ENCODE measurements at regions of chr7 and their contacts with region 1.

Region 1: DNA sequence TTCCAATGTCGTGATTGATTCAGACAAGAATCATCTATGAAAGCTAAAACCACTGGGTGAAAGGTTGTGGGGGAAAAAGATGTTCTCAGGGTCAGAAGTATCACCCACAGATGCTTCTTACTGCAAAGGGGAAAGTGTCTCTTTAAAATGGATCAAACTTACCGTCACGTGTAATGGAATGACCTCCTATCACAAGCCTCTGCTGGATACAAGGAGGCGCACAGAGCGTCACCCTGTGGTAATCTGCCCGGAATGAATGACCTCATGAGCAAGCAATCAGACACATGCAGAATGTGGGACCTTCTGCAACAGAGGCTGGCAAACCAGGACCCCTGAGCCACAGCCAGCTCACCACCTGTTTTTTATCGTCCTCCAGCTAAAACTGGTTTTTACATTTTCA is 33.0 kb downstream of the WIPF3 start:
- DNase-seq: peak; percentile 70 to 79 (median 72)
- H3K4me3 ChIP-seq: no peak overlapping the region
- H3K27ac ChIP-seq: no peak overlapping the region
- H3K4me1 ChIP-seq: peaks cover 18% of the 10 kb centered on the region
- H3K27me3 ChIP-seq: no peaks in the 10 kb centered on the region
- CTCF ChIP-seq: no peak
- EP300 ChIP-seq: no peak
- POLR2A ChIP-seq: no peak

Region 2: DNA sequence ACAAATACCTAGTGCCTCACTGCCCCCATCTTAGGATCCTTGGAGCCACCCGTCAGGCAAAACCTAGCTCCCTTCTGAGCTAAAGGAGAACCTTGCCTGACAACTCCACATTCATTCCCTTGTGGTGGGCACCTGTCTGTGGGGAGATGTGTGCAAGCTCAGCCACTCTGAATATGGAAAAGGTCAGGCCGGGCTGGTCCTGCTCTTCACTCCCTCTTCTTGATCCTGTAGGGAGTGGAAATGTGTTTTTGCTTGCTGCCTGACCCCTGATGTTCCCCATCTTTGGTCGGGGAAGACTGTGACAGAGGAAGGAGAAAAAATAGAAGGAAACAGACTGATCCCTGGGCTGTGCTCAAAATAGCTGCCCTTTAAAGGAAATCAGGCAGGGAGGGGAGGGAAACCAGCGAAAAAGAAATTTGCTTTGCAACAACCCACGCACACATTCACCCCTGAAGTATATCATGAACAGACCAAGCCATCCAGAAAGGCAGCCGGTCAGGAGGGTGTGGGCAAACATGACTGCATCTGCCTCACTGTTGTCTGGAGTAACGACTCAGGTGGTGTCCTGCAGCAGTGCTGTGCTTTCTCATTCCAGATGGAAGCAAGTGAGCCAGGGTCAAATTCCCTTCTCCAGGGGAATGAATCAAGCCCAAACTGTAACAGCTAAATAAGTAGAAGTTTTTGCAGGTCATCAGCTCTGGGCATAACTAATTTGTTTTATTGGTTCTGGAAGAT is 76.3 kb after region 1 on chr7:
- intact Hi-C with region 1: loop called in 1 of 4 experiments (anchors 10 kb)
- DNase-seq: no peak
- H3K4me3 ChIP-seq: no peak overlapping the region
- H3K27ac ChIP-seq: peak overlapping the region in 1 of 2 donors; percentile 22
- H3K4me1 ChIP-seq: no peaks in the 10 kb centered on the region
- H3K27me3 ChIP-seq: no peaks in the 10 kb centered on the region
- CTCF ChIP-seq: no peak
- EP300 ChIP-seq: no peak
- POLR2A ChIP-seq: no peak